ENCODE measurements at regions of chr2 and their contacts with region 1.

Region 1: GRCh38 chr2:223101340-223102039 is 49.5 kb downstream of the KCNE4 start:
- DNase-seq: peak; percentile 93
- H3K4me3 Mint-ChIP-seq: no peak overlapping the region
- H3K27ac Mint-ChIP-seq: no peak overlapping the region
- H3K4me1 Mint-ChIP-seq: peaks cover 13% of the 10 kb centered on the region
- H3K27me3 Mint-ChIP-seq: no peaks in the 10 kb centered on the region
- CTCF ChIP-seq: peak; percentile 59

Region 2: GRCh38 chr2:223041527-223042109 is 59.9 kb before region 1 on chr2:
- CTCF ChIA-PET with region 1: no interaction called
- POLR2A ChIA-PET with region 1: no interaction called
- intact Hi-C with region 1: no loop called
- DNase-seq: peak; percentile 94
- H3K4me3 Mint-ChIP-seq: no peak overlapping the region
- H3K27ac Mint-ChIP-seq: peak overlapping the region; percentile 55
- H3K4me1 Mint-ChIP-seq: peaks cover 23% of the 10 kb centered on the region
- H3K27me3 Mint-ChIP-seq: no peaks in the 10 kb centered on the region
- CTCF ChIP-seq: no peak

Region 3: DNA sequence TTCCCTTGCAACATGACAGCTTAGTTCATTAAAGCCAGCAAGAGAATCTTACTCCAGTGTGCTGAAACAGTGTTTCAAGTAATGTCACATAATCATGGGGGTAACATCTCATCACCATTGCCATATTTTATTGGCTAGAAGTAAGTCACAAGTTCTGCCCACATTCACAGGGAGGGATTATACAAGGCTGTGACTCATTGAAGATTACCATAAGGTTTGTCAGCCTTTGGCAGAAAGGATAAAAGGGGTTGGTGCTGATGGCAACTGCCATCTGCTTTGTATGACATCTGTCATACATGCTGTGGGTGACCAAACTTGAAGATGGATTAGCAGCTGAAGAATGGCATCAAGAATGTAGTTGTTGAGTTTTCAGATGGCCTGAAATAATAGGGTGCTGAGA is 11.7 kb after region 1 on chr2:
- CTCF ChIA-PET with region 1: interaction called, 24 read pairs
- POLR2A ChIA-PET with region 1: no interaction called
- intact Hi-C with region 1: no loop called
- DNase-seq: no peak
- H3K4me3 Mint-ChIP-seq: no peak overlapping the region
- H3K27ac Mint-ChIP-seq: no peak overlapping the region
- H3K4me1 Mint-ChIP-seq: peaks cover 5% of the 10 kb centered on the region
- H3K27me3 Mint-ChIP-seq: no peaks in the 10 kb centered on the region
- CTCF ChIP-seq: no peak

Measured in MCF 10A (cell line).